ENCODE measurements at regions of chr22 and their contacts with region 1.

Region 1: GRCh38 chr22:45994491-45995404 is 17.8 kb upstream of the WNT7B start:
- DNase-seq: peak; percentile 88
- H3K4me3 ChIP-seq: no peak overlapping the region
- H3K27ac ChIP-seq: peak overlapping the region; percentile 96 to 97; a peak in 3 of 4 replicates
- H3K4me1 ChIP-seq: peaks cover 30 to 53% of the 10 kb centered on the region in 2 experiments
- H3K27me3 ChIP-seq: no peaks in the 10 kb centered on the region
- CTCF ChIP-seq: peak; percentile 88
- EP300 ChIP-seq: no peak
- RAD21 ChIP-seq: peak; percentile 95

Region 2: GRCh38 chr22:46013460-46014416 is 19.0 kb after region 1 on chr22:
- CTCF ChIA-PET with region 1: interaction called, 108 read pairs
- POLR2A ChIA-PET with region 1: interaction called, 13 read pairs
- DNase-seq: peak; percentile 96
- H3K4me3 ChIP-seq: peak overlapping the region; percentile 64 to 76
- H3K27ac ChIP-seq: peak overlapping the region; percentile 98 to 99
- H3K4me1 ChIP-seq: peaks cover 23 to 47% of the 10 kb centered on the region in 2 experiments
- H3K27me3 ChIP-seq: no peaks in the 10 kb centered on the region
- CTCF ChIP-seq: peak; percentile 72
- EP300 ChIP-seq: peak in 1 of 2 experiments; percentile 87; a peak in 2 of 4 replicates
- RAD21 ChIP-seq: peak; percentile 70

Region 3: DNA sequence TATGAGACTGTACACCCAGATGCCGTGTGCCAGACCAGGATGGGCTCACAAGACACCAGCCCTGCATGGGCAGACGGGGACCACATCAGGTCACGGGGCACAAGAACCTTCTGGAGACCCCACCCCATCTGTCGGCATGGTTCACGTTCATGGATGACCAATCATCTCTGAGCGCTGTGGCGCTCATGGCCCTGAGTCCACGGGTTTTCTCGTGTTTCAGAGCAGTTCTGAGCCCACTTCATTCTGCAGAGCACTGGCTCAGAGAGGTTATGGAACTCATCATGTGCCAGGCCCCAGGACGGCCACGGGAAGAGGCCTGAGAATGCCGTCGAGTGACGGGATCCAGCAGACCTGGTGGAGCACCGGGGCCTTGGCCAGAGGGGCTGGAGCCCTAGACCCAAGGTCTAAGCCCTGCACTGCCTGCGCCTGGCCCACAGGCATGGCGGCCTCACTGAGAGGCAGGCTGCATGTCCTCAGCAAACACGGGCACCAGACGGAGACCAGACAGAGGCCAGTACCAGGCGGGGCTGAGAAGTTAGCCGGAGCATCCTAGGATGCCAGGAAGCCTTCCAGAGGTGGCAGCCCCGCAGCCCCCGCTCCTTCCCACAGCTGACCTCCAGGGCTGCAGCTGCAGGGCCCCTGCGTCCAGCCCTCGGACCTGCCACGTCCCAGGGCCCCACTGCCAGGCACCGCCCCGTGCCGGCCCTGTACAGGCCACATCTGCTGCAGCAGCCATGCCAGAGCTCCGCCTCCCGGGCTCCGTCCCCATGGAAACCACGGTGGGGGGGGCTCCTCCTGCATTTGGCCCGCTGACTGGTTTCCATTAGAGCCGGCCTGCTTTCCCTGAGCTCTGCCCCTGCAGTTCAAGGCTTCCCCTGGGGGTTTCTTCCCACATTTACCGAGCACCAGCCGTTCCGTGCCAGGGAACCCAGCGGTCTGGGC is 92.9 kb after region 1 on chr22:
- CTCF ChIA-PET with region 1: interaction called, 14 read pairs
- POLR2A ChIA-PET with region 1: interaction called, 3 read pairs
- DNase-seq: peak; percentile 94
- H3K4me3 ChIP-seq: peak overlapping the region; percentile 90 to 92
- H3K27ac ChIP-seq: peak overlapping the region; percentile 96 to 100
- H3K4me1 ChIP-seq: peaks cover 41 to 97% of the 10 kb centered on the region in 2 experiments
- H3K27me3 ChIP-seq: no peaks in the 10 kb centered on the region
- CTCF ChIP-seq: no peak
- EP300 ChIP-seq: peak; percentile 21 to 48; a peak in 3 of 4 replicates
- RAD21 ChIP-seq: peak; percentile 17

Region 4: DNA sequence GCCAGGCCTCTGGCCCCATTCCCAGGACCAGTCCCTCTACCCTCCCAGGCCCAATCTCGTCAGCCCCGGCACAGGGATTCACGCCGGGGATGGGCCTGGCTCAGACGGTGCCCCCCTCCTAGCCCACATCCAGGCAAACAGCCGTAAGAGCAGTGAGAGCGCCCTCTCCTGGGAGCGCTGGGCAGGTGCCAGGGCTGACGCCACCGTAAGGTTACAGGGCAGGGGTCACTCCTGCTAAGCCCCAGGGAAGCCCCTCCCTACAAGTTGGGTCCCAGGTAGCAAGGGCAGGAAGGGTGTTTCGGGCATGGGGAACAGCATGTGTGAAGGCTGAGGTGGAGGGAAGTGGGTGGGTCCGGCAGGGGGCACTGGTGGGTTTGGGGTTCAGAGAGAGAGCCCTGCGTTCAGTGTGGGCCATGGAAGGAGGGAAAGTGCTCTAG is 136.4 kb after region 1 on chr22:
- CTCF ChIA-PET with region 1: interaction called, 13 read pairs
- POLR2A ChIA-PET with region 1: no interaction called
- DNase-seq: peak; percentile 76
- H3K4me3 ChIP-seq: no peak overlapping the region; a peak in 1 of 4 replicates
- H3K27ac ChIP-seq: no peak overlapping the region
- H3K4me1 ChIP-seq: no peaks in the 10 kb centered on the region; a peak in 1 of 4 replicates
- H3K27me3 ChIP-seq: no peaks in the 10 kb centered on the region
- CTCF ChIP-seq: peak; percentile 56
- EP300 ChIP-seq: no peak
- RAD21 ChIP-seq: peak; percentile 2; the same call in 1 of the 2 replicates